Activated B cell treated with CpG ODN at 0.5 μM for 24 hours (primary cell): ENCODE measurements at regions of chr6 and their contacts with region 1.

Region 1: DNA sequence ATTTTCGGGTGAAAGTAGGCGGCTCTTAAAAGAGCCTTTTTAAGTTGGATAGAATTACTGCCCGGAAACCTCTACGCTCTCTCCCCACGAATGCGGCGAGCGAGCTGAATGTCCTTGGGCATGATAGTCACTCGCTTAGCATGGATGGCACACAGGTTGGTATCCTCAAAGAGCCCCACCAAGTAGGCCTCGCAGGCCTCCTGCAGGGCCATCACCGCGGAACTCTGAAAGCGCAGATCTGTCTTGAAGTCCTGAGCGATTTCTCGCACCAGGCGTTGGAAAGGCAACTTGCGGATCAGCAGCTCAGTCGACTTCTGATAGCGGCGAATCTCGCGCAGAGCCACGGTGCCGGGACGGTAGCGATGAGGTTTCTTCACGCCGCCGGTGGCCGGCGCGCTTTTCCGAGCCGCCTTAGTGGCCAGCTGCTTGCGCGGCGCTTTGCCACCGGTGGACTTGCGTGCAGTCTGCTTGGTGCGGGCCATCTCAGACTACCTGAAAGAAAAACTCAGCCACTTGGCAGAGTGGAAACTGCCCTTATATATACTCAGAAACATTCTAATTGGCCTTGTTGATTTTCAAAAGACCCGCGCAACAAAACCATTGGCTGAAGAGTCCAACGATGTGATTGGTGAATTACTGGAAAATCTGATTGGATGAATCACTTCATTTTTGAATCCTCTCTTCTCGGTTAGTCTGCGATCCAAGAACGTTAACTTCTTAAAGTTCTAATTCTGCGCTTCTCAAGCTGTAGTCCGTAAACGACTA is 93.9 kb upstream of the BTN3A2 start:
- DNase-seq: peak; percentile 49
- ATAC-seq: peak; percentile 18
- H3K4me3 Mint-ChIP-seq: no peak overlapping the region
- H3K27ac Mint-ChIP-seq: no peak overlapping the region
- H3K4me1 Mint-ChIP-seq: peaks cover 24% of the 10 kb centered on the region
- H3K27me3 Mint-ChIP-seq: no peaks in the 10 kb centered on the region
- CTCF ChIP-seq: no peak

Region 2: DNA sequence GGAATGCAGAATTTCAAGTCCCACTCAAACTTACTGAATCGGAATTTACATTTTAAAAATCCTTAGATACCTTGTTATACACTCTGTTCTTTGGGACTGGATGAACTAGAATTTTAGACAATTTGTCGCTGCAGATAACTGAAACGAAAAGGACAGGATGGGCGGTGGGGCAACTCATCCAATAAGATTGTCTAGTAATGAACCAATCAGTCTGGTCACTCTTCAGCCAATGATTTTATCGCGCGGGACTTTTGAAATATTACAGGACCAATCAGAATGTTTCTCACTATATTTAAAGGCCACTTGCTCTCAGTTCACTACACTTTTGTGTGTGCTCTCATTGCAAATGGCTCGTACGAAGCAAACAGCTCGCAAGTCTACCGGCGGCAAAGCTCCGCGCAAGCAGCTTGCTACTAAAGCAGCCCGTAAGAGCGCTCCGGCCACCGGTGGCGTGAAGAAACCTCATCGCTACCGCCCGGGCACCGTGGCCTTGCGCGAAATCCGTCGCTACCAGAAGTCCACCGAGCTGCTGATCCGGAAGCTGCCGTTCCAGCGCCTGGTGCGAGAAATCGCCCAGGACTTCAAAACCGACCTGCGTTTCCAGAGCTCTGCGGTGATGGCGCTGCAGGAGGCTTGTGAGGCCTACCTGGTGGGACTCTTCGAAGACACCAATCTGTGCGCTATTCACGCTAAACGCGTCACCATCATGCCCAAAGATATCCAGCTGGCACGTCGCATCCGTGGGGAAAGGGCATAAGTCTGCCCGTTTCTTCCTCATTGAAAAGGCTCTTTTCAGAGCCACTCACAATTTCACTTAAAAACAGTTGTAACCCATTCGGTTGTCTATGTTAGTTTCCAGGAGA is 225.8 kb before region 1 on chr6:
- CTCF ChIA-PET with region 1: no interaction called
- POLR2A ChIA-PET with region 1: interaction called, 18 read pairs
- intact Hi-C with region 1: no loop called
- DNase-seq: peak; percentile 51
- ATAC-seq: peak; percentile 58
- H3K4me3 Mint-ChIP-seq: peak overlapping the region; percentile 91
- H3K27ac Mint-ChIP-seq: peak overlapping the region; percentile 99
- H3K4me1 Mint-ChIP-seq: peaks cover 24% of the 10 kb centered on the region
- H3K27me3 Mint-ChIP-seq: no peaks in the 10 kb centered on the region
- CTCF ChIP-seq: no peak

Region 3: DNA sequence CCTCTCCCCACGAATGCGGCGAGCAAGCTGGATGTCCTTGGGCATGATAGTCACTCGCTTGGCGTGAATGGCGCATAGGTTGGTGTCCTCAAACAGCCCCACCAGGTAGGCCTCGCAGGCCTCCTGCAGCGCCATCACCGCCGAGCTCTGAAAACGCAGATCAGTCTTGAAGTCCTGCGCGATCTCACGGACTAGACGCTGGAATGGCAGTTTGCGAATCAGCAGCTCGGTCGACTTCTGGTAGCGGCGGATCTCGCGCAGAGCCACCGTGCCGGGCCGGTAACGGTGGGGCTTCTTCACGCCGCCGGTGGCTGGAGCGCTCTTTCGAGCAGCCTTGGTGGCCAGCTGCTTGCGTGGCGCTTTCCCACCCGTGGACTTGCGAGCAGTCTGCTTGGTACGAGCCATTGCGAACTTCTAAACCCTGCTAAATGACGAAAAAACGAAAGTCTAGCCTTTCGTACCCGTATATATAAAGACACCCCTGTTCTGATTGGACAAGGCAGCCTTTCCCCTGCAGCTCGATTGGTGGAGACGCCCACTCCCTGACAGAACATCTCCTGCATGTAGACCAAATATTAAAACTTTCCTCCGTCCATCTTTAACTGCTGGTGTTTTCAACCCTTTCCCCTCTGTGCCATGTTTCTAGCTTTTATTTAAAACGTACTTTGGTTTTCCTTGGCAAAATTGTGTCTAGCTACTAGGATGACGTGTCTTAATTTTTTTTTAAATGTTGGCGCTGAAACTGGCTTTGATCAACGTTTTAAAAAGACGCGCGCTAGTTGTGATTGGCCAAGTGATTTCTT is 74.0 kb before region 1 on chr6:
- CTCF ChIA-PET with region 1: no interaction called
- POLR2A ChIA-PET with region 1: interaction called, 227 read pairs
- intact Hi-C with region 1: loop called (anchors 1 kb)
- DNase-seq: peak; percentile 63
- ATAC-seq: peak; percentile 53
- H3K4me3 Mint-ChIP-seq: peak overlapping the region; percentile 93
- H3K27ac Mint-ChIP-seq: peak overlapping the region; percentile 96
- H3K4me1 Mint-ChIP-seq: peaks cover 52% of the 10 kb centered on the region
- H3K27me3 Mint-ChIP-seq: no peaks in the 10 kb centered on the region
- CTCF ChIP-seq: no peak

Region 4: GRCh38 chr6:26249957-26250697 is 21.0 kb before region 1 on chr6:
- CTCF ChIA-PET with region 1: interaction called, 9 read pairs
- POLR2A ChIA-PET with region 1: interaction called, 12 read pairs
- intact Hi-C with region 1: loop called (anchors 1 kb)
- DNase-seq: peak; percentile 57
- ATAC-seq: peak; percentile 63
- H3K4me3 Mint-ChIP-seq: peak overlapping the region; percentile 94
- H3K27ac Mint-ChIP-seq: peak overlapping the region; percentile 90
- H3K4me1 Mint-ChIP-seq: peaks cover 36% of the 10 kb centered on the region
- H3K27me3 Mint-ChIP-seq: no peaks in the 10 kb centered on the region
- CTCF ChIP-seq: no peak

Region 5: DNA sequence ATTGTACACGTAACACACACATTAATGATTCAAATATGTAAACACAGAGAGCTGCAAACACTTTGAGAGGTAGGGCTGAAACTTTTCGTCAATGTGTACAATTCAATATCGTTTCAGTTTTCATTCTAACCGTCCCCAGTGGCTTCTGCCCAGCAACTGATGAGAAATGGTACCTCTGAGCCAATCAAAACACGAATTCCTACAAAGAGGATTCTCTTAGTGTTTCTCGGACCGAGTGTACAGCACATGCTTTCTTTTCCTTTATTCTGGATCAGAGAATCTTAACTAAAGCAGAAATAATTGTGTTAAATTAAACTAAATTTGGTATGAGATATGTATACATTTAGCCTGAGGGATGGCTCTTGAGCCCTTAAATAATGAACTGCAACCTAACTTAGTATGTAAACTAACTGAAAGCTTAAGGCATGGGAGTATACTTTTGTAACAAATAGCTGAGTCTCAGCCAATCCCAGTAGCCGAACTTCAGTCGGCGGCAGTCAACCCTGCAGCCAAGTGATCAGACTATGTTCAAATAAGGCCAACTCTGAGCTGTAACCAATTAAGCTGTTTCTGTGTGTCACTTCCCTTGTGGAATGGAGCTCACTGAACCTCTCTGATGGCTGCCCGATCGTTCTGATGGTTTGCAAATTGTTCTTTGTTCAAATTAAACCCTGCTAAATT is 202.8 kb after region 1 on chr6:
- CTCF ChIA-PET with region 1: no interaction called
- POLR2A ChIA-PET with region 1: interaction called, 14 read pairs
- intact Hi-C with region 1: no loop called
- DNase-seq: peak; percentile 49
- ATAC-seq: peak; percentile 94
- H3K4me3 Mint-ChIP-seq: peak overlapping the region; percentile 96
- H3K27ac Mint-ChIP-seq: peak overlapping the region; percentile 100
- H3K4me1 Mint-ChIP-seq: peaks cover 70% of the 10 kb centered on the region
- H3K27me3 Mint-ChIP-seq: no peaks in the 10 kb centered on the region
- CTCF ChIP-seq: no peak

Region 6: GRCh38 chr6:27138837-27139755 is 868.0 kb after region 1 on chr6:
- CTCF ChIA-PET with region 1: no interaction called
- POLR2A ChIA-PET with region 1: interaction called, 26 read pairs
- intact Hi-C with region 1: no loop called
- DNase-seq: peak; percentile 59
- ATAC-seq: peak; percentile 82
- H3K4me3 Mint-ChIP-seq: peak overlapping the region; percentile 97
- H3K27ac Mint-ChIP-seq: peak overlapping the region; percentile 98
- H3K4me1 Mint-ChIP-seq: peaks cover 62% of the 10 kb centered on the region
- H3K27me3 Mint-ChIP-seq: no peaks in the 10 kb centered on the region
- CTCF ChIP-seq: no peak